Mammary epithelial cell (primary cell): ENCODE measurements at regions of chr19 and their contacts with region 1.

Region 1: GRCh38 chr19:10424011-10424637 is 3.8 kb downstream of the PDE4A start:
- DNase-seq: peak; percentile 64
- H3K4me3 ChIP-seq: peak overlapping the region in 2 of 3 experiments; percentile 18 to 29
- H3K27ac ChIP-seq: no peak overlapping the region
- H3K4me1 ChIP-seq: peaks cover 20% of the 10 kb centered on the region
- H3K27me3 ChIP-seq: peaks cover 24% of the 10 kb centered on the region
- CTCF ChIP-seq: peak; percentile 73 to 87

Region 2: GRCh38 chr19:10245189-10245939 is 178.8 kb before region 1 on chr19:
- CTCF ChIA-PET with region 1: no interaction called
- dilution Hi-C with region 1: no loop called
- in situ Hi-C with region 1: no loop called
- intact Hi-C with region 1: no loop called
- DNase-seq: no peak
- H3K4me3 ChIP-seq: no peak overlapping the region
- H3K27ac ChIP-seq: no peak overlapping the region
- H3K4me1 ChIP-seq: peaks cover 6% of the 10 kb centered on the region
- H3K27me3 ChIP-seq: no peaks in the 10 kb centered on the region
- CTCF ChIP-seq: no peak

Region 3: GRCh38 chr19:10295305-10295846 is 128.7 kb before region 1 on chr19:
- CTCF ChIA-PET with region 1: no interaction called
- dilution Hi-C with region 1: no loop called
- in situ Hi-C with region 1: no loop called
- intact Hi-C with region 1: no loop called
- DNase-seq: no peak
- H3K4me3 ChIP-seq: no peak overlapping the region
- H3K27ac ChIP-seq: no peak overlapping the region
- H3K4me1 ChIP-seq: peaks cover 18% of the 10 kb centered on the region
- H3K27me3 ChIP-seq: no peaks in the 10 kb centered on the region
- CTCF ChIP-seq: no peak

Region 4: GRCh38 chr19:10439588-10439987 is 15.5 kb after region 1 on chr19:
- CTCF ChIA-PET with region 1: interaction called, 12 read pairs
- dilution Hi-C with region 1: no loop called
- in situ Hi-C with region 1: no loop called
- intact Hi-C with region 1: no loop called
- DNase-seq: no peak
- H3K4me3 ChIP-seq: no peak overlapping the region
- H3K27ac ChIP-seq: no peak overlapping the region
- H3K4me1 ChIP-seq: no peaks in the 10 kb centered on the region
- H3K27me3 ChIP-seq: no peaks in the 10 kb centered on the region
- CTCF ChIP-seq: no peak

Region 5: DNA sequence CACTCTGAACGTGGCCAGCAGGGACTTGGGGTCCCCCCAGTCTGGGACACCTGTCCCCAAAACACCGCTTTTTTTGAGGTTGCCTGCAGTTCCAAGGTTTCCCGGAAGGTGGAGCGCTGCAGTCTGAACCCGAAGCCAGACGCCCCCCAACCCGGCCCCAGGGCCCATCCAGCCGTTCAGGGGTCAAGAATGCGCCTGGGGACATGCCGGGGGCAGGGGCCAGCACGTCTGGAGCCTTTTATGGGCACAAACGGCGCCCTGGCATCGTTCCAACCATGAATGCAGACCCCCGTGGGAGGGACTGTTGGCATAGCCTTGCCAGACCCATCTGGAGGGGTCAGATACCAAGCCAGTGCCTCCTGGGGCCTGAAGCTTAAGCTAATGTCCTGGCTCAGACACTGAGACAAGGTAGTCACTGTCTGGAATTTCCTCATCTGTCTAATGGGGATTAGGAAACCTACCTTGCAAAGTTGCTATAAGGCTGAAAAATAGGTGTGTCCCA is 86.2 kb after region 1 on chr19:
- CTCF ChIA-PET with region 1: no interaction called
- dilution Hi-C with region 1: loop called (anchors 5 kb)
- in situ Hi-C with region 1: no loop called
- intact Hi-C with region 1: no loop called
- DNase-seq: peak; percentile 72
- H3K4me3 ChIP-seq: no peak overlapping the region
- H3K27ac ChIP-seq: no peak overlapping the region
- H3K4me1 ChIP-seq: peaks cover 14% of the 10 kb centered on the region
- H3K27me3 ChIP-seq: no peaks in the 10 kb centered on the region
- CTCF ChIP-seq: peak; percentile 46 to 73